ENCODE measurements at regions of chr12 and their contacts with region 1.

Region 1: DNA sequence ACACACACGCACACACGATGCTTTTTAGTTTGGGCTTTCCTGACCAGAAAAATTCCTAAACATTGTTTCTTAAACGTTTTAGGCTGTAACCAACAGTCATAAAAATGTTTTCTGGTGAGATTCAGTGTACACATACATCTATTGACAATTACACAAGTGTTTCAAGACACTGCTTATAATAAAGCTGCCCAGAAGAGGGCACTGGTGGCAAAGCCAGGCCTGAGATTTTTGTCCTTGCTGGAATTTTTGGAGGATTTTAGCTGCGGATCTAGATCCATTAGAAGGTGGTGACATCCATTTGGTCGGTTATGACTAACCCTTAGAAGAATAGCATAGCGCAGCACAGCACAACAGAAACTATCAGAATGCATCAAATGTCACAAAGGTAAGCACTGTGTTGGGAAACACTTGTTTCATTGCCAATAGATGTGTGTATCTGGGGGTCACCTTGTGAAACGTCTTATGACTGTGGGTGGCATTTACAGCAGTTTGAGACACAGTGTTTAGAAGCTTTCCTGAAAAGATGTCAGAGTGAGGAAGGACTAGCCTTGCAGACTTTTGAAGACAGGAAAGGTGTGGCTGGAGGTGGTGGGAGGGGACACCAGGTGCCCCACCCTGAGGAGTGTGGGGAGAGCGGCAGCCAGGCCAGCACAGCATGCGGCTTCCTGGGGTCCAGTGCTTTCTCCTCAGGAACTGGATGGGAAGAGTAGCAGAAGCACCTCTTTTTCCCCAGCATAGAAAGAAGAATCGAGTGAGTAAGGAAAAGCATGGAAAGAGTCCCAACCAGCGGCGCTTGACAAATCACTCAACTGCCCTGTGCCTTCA is 54.7 kb upstream of the FKBP4 start:
- DNase-seq: no peak
- H3K4me3 ChIP-seq: no peak overlapping the region
- H3K27ac ChIP-seq: no peak overlapping the region
- H3K4me1 ChIP-seq: no peaks in the 10 kb centered on the region
- H3K27me3 ChIP-seq: peaks cover 3% of the 10 kb centered on the region
- CTCF ChIP-seq: peak; percentile 44 to 57

Region 2: GRCh38 chr12:2652401-2653081 is 87.5 kb before region 1 on chr12:
- CTCF ChIA-PET with region 1: no interaction called
- dilution Hi-C with region 1: no loop called
- in situ Hi-C with region 1: no loop called
- intact Hi-C with region 1: no loop called
- DNase-seq: no peak
- H3K4me3 ChIP-seq: no peak overlapping the region
- H3K27ac ChIP-seq: no peak overlapping the region
- H3K4me1 ChIP-seq: no peaks in the 10 kb centered on the region
- H3K27me3 ChIP-seq: peaks cover 3% of the 10 kb centered on the region
- CTCF ChIP-seq: no peak

Region 3: DNA sequence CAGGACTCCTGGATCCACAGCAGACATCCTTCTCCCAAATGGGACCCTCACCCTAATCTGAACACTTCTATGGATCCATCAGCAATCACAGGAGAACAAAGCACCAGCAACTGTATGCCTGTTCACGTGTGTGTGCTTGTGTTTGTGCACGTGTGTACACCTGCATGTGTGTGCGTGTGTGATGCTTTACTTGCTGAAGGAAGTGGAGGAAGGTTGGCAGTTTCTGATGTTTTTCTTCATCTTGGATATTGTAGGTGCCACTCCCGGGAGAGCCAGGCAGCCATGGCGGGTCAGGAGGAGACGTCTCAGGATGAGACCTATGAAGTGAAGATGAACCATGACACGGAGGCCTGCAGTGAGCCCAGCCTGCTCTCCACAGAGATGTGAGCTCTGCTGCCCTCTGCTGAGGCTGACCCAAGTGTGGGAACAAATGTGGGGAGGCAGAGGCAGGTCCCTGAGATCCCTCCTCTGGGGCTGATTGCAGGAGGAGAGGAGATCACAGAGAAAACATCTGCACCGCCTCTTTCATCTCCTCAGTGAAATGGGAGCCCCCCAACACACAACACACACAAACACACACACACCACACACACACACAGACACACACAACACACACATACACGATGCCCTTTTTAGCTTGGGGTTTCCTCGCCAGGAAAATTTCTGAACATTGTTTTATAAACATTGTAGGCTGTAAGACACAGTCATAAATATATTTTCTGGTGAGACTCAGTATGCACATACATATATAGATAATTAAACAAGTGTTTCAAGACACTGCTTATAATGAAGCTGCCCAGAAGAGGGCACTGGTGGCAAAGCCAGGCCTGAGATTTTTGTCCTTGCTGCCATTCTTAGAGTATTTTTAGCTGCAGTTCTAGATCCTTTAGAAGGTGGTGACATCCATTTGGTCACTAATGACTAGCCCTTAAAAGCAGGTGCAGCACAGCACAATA is 57.5 kb before region 1 on chr12:
- CTCF ChIA-PET with region 1: interaction called, 11 read pairs
- dilution Hi-C with region 1: no loop called
- in situ Hi-C with region 1: no loop called
- intact Hi-C with region 1: no loop called
- DNase-seq: peak; percentile 15
- H3K4me3 ChIP-seq: no peak overlapping the region
- H3K27ac ChIP-seq: no peak overlapping the region
- H3K4me1 ChIP-seq: no peaks in the 10 kb centered on the region
- H3K27me3 ChIP-seq: no peaks in the 10 kb centered on the region
- CTCF ChIP-seq: peak; percentile 48 to 67

Region 4: DNA sequence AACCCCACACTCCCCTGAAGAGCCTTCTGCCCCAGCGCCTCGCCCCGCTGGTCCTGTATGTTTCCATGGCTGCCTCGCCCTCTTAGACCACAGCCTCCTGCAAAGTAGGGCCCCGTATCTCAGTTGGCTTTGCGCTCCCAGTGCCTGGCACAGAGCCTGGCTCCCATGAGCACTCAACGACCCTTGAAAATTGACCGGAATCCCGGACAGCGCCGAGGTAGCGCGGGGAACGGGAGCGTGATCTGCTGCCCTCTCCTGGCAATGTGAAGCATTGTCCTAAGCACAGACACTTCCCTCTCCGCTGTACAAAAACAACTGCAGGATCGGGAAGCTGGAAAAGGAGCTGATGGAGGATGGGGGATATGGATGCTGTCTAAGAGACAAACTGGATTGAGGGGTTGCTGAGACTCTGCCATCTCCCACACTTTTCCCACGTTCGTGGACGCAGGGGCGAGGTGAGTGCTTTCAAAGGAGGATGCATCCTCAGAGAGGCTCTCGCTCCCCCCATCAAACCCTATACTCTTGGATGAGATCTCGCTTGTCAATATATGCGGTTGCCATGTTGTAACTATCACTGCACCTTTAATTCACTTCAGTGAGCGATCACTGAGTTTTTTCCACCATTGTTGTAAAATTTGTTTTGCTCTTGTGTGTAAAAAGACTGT is 44.0 kb after region 1 on chr12:
- CTCF ChIA-PET with region 1: no interaction called
- dilution Hi-C with region 1: loop called (anchors 5 kb)
- in situ Hi-C with region 1: no loop called
- intact Hi-C with region 1: loop called (anchors 1 kb)
- DNase-seq: peak; percentile 18
- H3K4me3 ChIP-seq: peak overlapping the region in 1 of 3 experiments; percentile 25
- H3K27ac ChIP-seq: no peak overlapping the region
- H3K4me1 ChIP-seq: no peaks in the 10 kb centered on the region
- H3K27me3 ChIP-seq: no peaks in the 10 kb centered on the region
- CTCF ChIP-seq: peak; percentile 88 to 94

Region 5: GRCh38 chr12:2812290-2813213 is 72.5 kb after region 1 on chr12 and contains the start of gene ITFG2:
- CTCF ChIA-PET with region 1: no interaction called
- dilution Hi-C with region 1: no loop called
- in situ Hi-C with region 1: no loop called
- intact Hi-C with region 1: loop called (anchors 1 kb)
- DNase-seq: peak; percentile 97
- H3K4me3 ChIP-seq: peak within 1 kb of the TSS; percentile 62 to 99 (median 92)
- H3K27ac ChIP-seq: peak within 1 kb of the TSS; percentile 63
- H3K4me1 ChIP-seq: peaks cover 9% of the 10 kb centered on the region
- H3K27me3 ChIP-seq: no peaks in the 10 kb centered on the region
- CTCF ChIP-seq: no peak
- total RNA-seq, gene ITFG2: 15.2 to 25.9 TPM

Region 6: DNA sequence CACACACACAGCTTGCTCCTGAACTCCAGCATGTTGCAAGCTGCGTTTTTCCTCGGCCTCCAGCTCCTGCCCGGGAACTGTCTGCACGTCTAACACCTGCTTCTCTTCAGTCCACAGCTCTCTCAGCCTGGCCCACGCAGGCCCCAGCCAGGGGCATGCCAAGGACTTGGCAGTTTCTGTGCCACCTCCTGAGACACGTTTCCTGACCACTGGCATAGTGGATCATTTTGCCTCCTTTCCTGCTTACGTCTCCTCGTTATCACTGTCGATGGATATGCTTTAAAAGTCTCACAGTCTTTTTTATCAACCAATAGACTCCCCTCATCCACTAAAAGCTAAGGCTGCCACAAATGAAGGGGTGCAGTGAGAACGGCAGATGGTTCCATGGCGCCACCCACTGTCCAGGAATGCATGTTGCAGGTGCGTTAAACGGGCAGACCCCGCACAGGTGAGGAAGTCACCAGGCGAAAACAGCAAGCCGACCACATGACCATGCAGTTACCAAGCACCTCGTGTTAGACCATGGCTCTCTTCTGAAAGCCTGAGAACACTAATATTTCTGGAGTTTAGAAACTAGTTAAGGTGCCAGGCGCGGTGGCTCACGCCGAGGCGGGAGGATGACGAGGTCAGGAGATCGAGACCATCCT is 204.5 kb after region 1 on chr12:
- CTCF ChIA-PET with region 1: no interaction called
- dilution Hi-C with region 1: no loop called
- in situ Hi-C with region 1: no loop called
- intact Hi-C with region 1: loop called (anchors 2 kb)
- DNase-seq: peak; percentile 46
- H3K4me3 ChIP-seq: peak overlapping the region in 1 of 3 experiments; percentile 24
- H3K27ac ChIP-seq: no peak overlapping the region
- H3K4me1 ChIP-seq: no peaks in the 10 kb centered on the region
- H3K27me3 ChIP-seq: no peaks in the 10 kb centered on the region
- CTCF ChIP-seq: peak; percentile 91 to 92

Region 7: DNA sequence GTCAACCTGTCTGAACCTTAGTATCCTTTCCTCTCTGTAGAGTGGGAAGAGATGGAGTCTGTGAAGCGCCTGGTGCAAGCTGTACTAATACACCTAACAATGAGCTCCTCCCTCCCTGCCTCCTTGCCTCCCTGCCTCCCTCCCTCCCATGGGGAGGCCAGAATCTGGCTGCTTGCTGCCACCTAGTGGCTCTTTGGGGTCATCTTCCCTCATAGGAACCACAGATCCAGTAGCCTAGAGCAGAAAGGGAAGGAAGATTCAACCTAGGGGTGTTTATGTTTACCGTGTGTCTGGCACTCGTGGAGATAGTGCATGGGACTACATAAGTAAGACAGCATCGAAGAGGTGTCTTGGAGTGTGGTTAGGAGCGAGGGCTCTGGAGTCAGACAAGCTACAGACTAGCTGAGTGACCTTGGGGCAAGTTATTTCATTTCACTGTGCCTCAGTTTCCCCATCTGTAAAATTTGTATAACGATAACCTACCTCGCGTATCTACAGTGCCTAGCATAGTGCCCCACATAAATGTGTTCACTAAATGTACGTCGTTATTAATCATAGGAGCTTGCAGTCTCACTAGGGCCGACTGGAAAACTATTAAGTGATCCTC is 301.6 kb after region 1 on chr12:
- CTCF ChIA-PET with region 1: no interaction called
- dilution Hi-C with region 1: no loop called
- in situ Hi-C with region 1: no loop called
- intact Hi-C with region 1: loop called (anchors 10 kb)
- DNase-seq: peak; percentile 69
- H3K4me3 ChIP-seq: no peak overlapping the region
- H3K27ac ChIP-seq: no peak overlapping the region
- H3K4me1 ChIP-seq: no peaks in the 10 kb centered on the region
- H3K27me3 ChIP-seq: no peaks in the 10 kb centered on the region
- CTCF ChIP-seq: peak; percentile 59 to 75

Region 8: DNA sequence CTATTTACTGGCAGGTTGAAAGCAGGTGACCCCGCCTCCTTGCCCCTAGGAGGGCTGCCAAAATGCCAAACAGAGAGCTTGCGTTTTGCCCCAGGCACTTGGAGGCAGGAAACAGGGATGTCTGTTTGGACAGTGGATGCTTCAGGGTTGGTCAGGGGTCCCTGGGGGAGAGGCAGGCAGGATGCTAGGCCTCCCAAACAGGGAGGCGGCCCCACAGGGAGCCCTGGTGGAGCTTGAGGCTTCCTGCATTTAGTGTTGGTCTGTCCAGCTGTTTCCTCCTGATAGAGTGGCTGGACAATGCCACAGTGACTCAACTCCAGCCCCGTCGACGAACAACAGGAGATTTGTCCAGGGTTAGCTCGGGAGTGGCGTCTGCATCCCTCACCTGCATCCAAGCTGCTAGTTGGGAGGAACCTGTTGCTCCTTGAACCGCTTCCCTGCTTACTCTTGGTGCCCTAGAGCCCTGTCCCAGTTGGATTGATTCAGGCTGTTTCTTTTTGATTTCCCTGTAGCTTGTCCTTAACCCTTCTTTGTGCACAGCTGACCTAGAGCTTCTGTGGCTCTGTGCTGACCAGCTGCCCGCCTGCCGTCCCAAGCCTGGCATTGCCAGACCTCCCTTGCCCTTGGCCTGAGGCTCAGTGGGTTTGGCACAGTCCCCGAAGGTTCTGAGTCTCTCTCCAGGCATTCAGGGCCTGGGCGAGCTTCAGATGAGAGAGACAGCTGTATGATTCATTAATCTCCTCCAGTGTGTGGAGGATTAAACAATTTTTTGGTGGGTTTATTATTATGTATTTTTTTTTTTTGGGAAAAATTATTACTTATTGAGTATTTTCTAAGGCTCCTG is 383.0 kb after region 1 on chr12:
- CTCF ChIA-PET with region 1: no interaction called
- dilution Hi-C with region 1: no loop called
- in situ Hi-C with region 1: no loop called
- intact Hi-C with region 1: no loop called
- DNase-seq: peak; percentile 79
- H3K4me3 ChIP-seq: no peak overlapping the region
- H3K27ac ChIP-seq: peak overlapping the region; percentile 38
- H3K4me1 ChIP-seq: peaks cover 56% of the 10 kb centered on the region
- H3K27me3 ChIP-seq: no peaks in the 10 kb centered on the region
- CTCF ChIP-seq: no peak

Measured in mammary epithelial cell (primary cell).